ENCODE measurements at regions of chr1 and their contacts with region 1.

Region 1: GRCh38 chr1:212035123-212035834 is at the starts of genes DTL and INTS7:
- DNase-seq: peak; percentile 99
- H3K4me3 Mint-ChIP-seq: peak within 1 kb of the TSS; percentile 97
- H3K27ac Mint-ChIP-seq: peak within 1 kb of the TSS; percentile 99
- H3K4me1 Mint-ChIP-seq: peaks cover 61% of the 10 kb centered on the region
- H3K27me3 Mint-ChIP-seq: peaks cover 2% of the 10 kb centered on the region
- total RNA-seq, gene DTL: 82.2 to 88.2 TPM
- total RNA-seq, gene INTS7: 19.3 to 19.6 TPM

Region 2: GRCh38 chr1:211382714-211383480 is 652.4 kb before region 1 on chr1:
- CTCF ChIA-PET with region 1: no interaction called
- POLR2A ChIA-PET with region 1: no interaction called
- intact Hi-C with region 1: loop called (anchors 10 kb)
- DNase-seq: peak; percentile 88
- H3K4me3 Mint-ChIP-seq: peak overlapping the region; percentile 78
- H3K27ac Mint-ChIP-seq: peak overlapping the region; percentile 88
- H3K4me1 Mint-ChIP-seq: peaks cover 42% of the 10 kb centered on the region
- H3K27me3 Mint-ChIP-seq: no peaks in the 10 kb centered on the region

Region 3: GRCh38 chr1:211698161-211699026 is 336.9 kb before region 1 on chr1:
- CTCF ChIA-PET with region 1: interaction called, 42 read pairs
- POLR2A ChIA-PET with region 1: no interaction called
- intact Hi-C with region 1: loop called (anchors 1 kb)
- DNase-seq: peak; percentile 90
- H3K4me3 Mint-ChIP-seq: peak overlapping the region; percentile 22
- H3K27ac Mint-ChIP-seq: no peak overlapping the region
- H3K4me1 Mint-ChIP-seq: peaks cover 16% of the 10 kb centered on the region
- H3K27me3 Mint-ChIP-seq: no peaks in the 10 kb centered on the region

Region 4: GRCh38 chr1:212024469-212025149 is 10.7 kb before region 1 on chr1:
- CTCF ChIA-PET with region 1: interaction called, 20 read pairs
- POLR2A ChIA-PET with region 1: no interaction called
- intact Hi-C with region 1: no loop called
- DNase-seq: no peak
- H3K4me3 Mint-ChIP-seq: no peak overlapping the region
- H3K27ac Mint-ChIP-seq: no peak overlapping the region
- H3K4me1 Mint-ChIP-seq: peaks cover 19% of the 10 kb centered on the region
- H3K27me3 Mint-ChIP-seq: no peaks in the 10 kb centered on the region

Region 5: GRCh38 chr1:212368073-212368484 is 332.8 kb after region 1 on chr1:
- CTCF ChIA-PET with region 1: interaction called, 24 read pairs
- POLR2A ChIA-PET with region 1: no interaction called
- intact Hi-C with region 1: no loop called
- DNase-seq: peak; percentile 64
- H3K4me3 Mint-ChIP-seq: no peak overlapping the region
- H3K27ac Mint-ChIP-seq: peak overlapping the region; percentile 56
- H3K4me1 Mint-ChIP-seq: no peaks in the 10 kb centered on the region
- H3K27me3 Mint-ChIP-seq: no peaks in the 10 kb centered on the region

Region 6: GRCh38 chr1:212671342-212672031 is 636.2 kb after region 1 on chr1:
- CTCF ChIA-PET with region 1: no interaction called
- POLR2A ChIA-PET with region 1: no interaction called
- intact Hi-C with region 1: loop called (anchors 10 kb)
- DNase-seq: no peak
- H3K4me3 Mint-ChIP-seq: no peak overlapping the region
- H3K27ac Mint-ChIP-seq: no peak overlapping the region
- H3K4me1 Mint-ChIP-seq: peaks cover 15% of the 10 kb centered on the region
- H3K27me3 Mint-ChIP-seq: peaks cover 5% of the 10 kb centered on the region

Measured in activated CD4-positive, alpha-beta memory T cell treated with anti-CD3 and anti-CD28 coated beads for 36 hours (primary cell).